Calu3 (cell line): ENCODE measurements at regions of chr22 and their contacts with region 1.

Region 1: GRCh38 chr22:27919222-27919941 is at the start of gene PITPNB:
- DNase-seq: peak; percentile 99
- H3K4me3 Mint-ChIP-seq: peak within 1 kb of the TSS; percentile 74
- H3K27ac Mint-ChIP-seq: peak within 1 kb of the TSS; percentile 55
- H3K4me1 Mint-ChIP-seq: peaks cover 56% of the 10 kb centered on the region
- H3K27me3 Mint-ChIP-seq: no peaks in the 10 kb centered on the region
- CTCF ChIP-seq: no peak
- total RNA-seq, gene PITPNB: 136 and 154 TPM in 2 replicates

Region 2: GRCh38 chr22:27801616-27802388 is 117.6 kb before region 1 on chr22 and contains the start of gene MN1:
- CTCF ChIA-PET with region 1: no interaction called
- intact Hi-C with region 1: no loop called
- DNase-seq: peak; percentile 54
- H3K4me3 Mint-ChIP-seq: peak within 1 kb of the TSS; percentile 82
- H3K27ac Mint-ChIP-seq: peak within 1 kb of the TSS; percentile 52
- H3K4me1 Mint-ChIP-seq: peaks cover 18% of the 10 kb centered on the region
- H3K27me3 Mint-ChIP-seq: peaks cover 12% of the 10 kb centered on the region
- CTCF ChIP-seq: no peak
- total RNA-seq, gene MN1: 1.7 and 2.3 TPM in 2 replicates

Region 3: DNA sequence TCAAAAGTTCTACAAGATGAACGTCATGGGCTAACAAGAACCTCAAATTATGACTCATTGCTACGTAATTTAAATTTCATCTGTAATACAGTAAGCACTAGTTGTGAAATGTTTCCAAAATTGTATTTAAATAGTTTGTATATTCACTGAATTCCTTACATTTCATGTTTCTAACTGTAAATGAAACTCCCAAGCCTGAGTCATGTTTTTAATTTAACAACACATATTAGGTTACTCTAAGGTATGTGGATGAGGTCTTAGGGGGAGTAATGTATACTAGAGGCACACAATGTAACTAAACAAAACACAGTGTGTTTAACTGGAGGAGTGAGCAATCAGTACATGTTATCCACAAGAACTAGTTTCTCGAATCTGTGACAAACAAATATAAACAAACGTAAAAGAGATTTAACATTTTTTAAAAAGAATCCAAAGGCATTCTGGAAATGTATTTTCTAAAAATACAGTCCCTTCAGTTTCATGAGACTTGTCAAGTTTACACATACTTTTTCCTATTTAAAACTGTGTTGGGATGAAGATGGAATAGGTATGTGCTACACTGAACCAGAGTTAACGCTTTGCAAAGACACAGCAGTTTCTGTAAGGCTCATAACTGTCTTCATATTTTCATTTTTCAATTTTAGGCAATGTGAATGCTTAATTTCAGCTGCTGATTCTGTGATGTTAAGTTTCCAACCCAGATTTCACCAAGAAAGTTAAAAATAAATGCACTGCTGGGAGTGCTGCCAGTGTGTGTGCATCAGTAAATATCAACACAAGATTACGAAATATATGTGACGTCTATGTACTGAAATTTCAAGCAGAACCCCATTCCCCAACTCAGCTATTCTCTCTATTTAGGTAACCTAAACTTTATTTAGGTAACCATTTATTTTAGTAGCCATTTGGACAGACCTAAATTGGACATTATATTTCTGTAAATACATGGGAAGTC is 53.0 kb before region 1 on chr22:
- CTCF ChIA-PET with region 1: no interaction called
- intact Hi-C with region 1: loop called (anchors 5 kb)
- DNase-seq: no peak
- H3K4me3 Mint-ChIP-seq: no peak overlapping the region
- H3K27ac Mint-ChIP-seq: peak overlapping the region; percentile 59
- H3K4me1 Mint-ChIP-seq: peaks cover 59% of the 10 kb centered on the region
- H3K27me3 Mint-ChIP-seq: no peaks in the 10 kb centered on the region
- CTCF ChIP-seq: no peak

Region 4: DNA sequence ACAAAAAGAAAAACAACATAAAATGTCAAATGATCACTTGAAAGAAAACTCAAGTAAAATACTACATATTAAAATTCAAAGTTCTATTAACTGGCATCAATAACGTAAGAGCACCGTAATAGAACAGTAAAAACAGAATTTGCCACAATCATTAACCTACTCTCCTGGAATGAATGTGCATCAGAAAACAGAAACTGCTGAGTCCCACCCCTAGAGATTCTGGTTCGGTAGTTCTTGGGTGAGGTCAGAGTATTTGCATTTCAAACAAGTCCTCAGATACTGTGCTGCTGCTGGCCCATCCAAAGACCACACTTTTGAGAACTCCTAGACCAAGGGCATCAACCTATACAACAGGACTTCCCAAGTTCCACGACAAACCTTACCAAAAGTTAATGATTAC is 23.8 kb before region 1 on chr22:
- CTCF ChIA-PET with region 1: no interaction called
- intact Hi-C with region 1: loop called (anchors 2 kb)
- DNase-seq: no peak
- H3K4me3 Mint-ChIP-seq: no peak overlapping the region
- H3K27ac Mint-ChIP-seq: no peak overlapping the region
- H3K4me1 Mint-ChIP-seq: no peaks in the 10 kb centered on the region
- H3K27me3 Mint-ChIP-seq: no peaks in the 10 kb centered on the region
- CTCF ChIP-seq: no peak

Region 5: DNA sequence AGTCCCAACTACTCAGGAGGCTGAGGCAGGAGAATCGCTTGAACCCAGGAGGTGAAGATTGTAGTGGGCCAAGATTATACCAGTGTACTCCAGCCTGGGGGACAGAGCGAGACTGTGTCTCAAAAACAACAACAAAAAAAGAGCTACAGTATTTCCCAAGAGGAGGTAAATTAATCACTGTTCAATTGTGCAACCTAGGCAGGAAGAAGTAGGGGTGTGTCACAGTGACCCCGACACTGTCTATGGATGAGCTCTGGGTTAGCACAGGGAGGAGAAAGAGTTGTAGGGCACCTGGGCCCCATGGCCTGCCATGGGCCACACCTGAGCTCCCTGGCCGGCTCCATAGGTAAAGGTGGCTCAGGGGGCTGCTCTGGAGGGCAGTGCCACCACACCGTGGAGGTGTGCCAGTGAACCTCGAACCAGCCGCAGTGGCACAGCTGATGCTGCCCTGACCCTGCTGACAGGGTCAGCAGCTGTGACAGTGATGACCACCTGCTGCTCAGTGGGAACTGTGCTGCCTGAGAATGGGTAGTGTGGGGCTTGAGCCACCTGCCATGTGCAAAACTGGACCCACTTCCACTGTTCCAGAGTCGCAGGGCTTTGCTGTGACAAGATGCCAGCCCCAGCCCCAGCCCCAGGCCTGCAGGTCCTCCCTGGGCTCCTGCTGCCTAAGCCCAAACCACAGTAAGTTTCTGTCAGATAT is 83.6 kb after region 1 on chr22:
- CTCF ChIA-PET with region 1: no interaction called
- intact Hi-C with region 1: no loop called
- DNase-seq: no peak
- H3K4me3 Mint-ChIP-seq: no peak overlapping the region
- H3K27ac Mint-ChIP-seq: no peak overlapping the region
- H3K4me1 Mint-ChIP-seq: no peaks in the 10 kb centered on the region
- H3K27me3 Mint-ChIP-seq: peaks cover 16% of the 10 kb centered on the region
- CTCF ChIP-seq: no peak